Sciatic nerve (tissue), 2 donors: ENCODE measurements at regions of chr13 and their contacts with region 1.

Region 1: DNA sequence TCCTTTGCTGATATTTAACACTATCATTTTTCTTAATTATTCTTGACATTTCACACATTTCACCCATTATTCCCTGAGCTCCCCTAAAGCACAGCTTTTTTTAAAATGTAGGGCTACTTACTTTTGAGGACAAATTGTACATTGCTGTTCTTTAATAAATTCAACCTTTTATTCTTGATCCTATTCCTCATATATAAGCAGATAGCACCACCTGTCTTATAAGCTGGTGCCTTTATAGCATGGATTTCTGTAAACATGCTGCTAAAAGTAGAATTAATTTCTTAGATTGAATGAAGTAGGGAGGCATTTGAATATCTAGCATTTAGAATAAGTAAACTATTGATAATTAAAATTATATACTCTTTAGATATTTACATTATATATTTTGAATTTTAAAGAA is 603.4 kb upstream of the PCDH9 start:
- DNase-seq: no peak
- ATAC-seq: no peak

Region 2: DNA sequence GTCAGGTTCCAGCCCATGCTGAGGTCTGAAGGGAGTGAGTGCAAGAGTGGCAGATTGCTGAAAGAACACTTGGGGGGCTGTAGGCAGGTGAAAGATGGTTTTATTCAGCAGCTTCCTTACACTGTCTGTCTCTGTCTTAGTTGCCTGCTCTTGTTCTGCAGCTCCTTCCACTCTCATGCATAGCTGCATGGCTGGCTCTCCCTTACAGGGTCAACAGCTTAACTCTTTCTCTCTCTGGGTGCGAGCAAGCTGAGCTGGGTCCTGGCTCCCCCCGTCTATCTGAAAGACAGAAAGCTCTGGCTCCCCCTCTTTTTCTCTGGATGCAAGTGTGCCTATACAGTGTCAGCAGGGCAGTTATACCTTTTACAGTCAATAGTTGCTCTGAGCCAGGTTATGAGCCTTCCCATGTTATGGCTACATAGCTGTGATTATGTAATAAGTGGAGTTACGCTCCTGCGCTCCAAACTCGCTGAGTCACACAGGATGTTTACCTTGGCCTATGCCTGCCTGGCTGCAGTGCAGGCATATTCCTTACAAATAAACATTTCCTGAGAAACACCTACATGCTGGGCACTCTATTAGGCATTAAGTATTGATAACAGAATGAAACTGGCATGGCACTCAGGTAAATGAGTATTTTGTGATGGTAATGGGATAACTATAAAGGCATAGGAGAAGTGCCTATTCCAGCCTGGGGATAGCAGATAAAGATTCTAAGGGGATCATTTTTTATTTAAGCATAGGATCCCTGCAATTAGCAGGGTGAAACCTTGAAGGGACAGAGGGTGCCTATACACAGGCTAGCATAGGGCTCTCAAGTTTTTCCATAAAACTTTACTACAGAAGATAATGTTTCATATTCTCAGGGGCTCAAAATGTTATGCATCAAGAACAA is 223.5 kb after region 1 on chr13:
- intact Hi-C with region 1: no loop called
- DNase-seq: no peak
- ATAC-seq: peak; percentile 76

Region 3: DNA sequence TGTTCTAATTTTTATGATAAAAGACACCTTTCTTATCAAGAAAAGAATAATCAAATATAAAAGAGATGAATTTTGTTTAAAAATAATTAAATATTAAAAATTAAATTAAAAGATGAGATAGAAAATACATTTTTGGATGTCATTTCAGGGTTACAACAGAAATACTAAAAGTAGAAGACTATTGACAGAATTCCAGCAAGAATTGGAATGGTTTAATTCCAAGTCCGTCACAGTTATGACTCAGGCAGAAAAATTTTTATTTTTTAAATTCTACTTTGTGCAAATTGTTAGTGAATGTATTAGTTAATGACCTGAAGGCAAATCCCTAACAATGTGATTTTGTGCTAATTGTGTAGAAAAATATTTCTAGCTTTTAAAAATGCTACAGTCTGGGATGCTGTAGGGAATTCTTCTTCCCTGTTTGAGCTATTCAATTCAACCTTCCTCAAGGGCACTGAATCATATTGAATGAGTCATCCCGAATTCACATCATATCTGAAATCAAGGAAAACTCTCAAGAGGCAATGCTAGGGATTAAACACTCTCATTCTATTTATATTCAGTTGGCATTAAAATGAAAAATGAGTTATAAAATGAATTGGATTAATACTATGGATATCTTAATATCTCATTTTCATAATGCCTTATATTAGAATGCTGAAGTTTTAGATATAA is 1640.6 kb after region 1 on chr13:
- intact Hi-C with region 1: loop called (anchors 10 kb)
- DNase-seq: no peak
- ATAC-seq: no peak